ENCODE measurements at regions of chr13 and their contacts with region 1.

Region 1: DNA sequence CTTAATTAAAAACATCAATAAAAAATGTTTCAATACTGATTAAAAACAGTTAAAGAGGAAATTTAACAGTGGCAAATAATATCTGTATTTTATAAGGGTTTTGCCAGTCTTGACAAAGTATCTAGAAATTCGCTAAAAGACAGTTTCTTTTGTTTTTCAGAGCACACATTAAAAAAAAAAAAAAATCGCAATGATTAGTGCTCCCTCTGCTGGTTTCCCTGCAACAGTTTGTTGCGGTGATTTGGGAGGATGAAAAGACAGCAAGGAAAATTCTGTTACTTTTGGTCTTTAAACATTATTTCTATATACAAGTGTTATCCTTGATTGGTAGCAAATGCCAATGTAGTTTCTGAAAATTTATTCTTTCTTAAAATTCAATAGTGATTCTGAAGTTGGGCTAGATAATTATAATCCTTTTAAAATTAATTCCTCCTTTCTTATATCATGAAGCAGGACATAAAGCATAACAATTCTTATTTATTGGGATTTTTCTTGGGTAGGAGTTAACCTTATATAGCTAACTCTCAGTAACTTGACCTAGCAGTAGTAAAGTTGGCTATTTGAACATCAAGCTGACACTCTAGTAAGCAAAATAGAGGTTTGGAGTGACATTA is 23.1 kb upstream of the SPRY2 start:
- DNase-seq: no peak
- H3K4me3 ChIP-seq: no peak overlapping the region
- H3K27ac ChIP-seq: no peak overlapping the region
- H3K4me1 ChIP-seq: peaks cover 0 to 10% (median 3%) of the 10 kb centered on the region in 4 donors
- H3K27me3 ChIP-seq: no peaks in the 10 kb centered on the region
- CTCF ChIP-seq: peak; percentile 60 to 79

Region 2: GRCh38 chr13:79775830-79776229 is 588.2 kb before region 1 on chr13:
- intact Hi-C with region 1: loop called (anchors 10 kb)
- DNase-seq: peak in 1 of 2 donors; percentile 25
- H3K4me3 ChIP-seq: no peak overlapping the region
- H3K27ac ChIP-seq: no peak overlapping the region
- H3K4me1 ChIP-seq: peaks cover 0 to 10% (median 2%) of the 10 kb centered on the region in 4 donors
- H3K27me3 ChIP-seq: no peaks in the 10 kb centered on the region
- CTCF ChIP-seq: peak; percentile 32 to 52

Region 3: DNA sequence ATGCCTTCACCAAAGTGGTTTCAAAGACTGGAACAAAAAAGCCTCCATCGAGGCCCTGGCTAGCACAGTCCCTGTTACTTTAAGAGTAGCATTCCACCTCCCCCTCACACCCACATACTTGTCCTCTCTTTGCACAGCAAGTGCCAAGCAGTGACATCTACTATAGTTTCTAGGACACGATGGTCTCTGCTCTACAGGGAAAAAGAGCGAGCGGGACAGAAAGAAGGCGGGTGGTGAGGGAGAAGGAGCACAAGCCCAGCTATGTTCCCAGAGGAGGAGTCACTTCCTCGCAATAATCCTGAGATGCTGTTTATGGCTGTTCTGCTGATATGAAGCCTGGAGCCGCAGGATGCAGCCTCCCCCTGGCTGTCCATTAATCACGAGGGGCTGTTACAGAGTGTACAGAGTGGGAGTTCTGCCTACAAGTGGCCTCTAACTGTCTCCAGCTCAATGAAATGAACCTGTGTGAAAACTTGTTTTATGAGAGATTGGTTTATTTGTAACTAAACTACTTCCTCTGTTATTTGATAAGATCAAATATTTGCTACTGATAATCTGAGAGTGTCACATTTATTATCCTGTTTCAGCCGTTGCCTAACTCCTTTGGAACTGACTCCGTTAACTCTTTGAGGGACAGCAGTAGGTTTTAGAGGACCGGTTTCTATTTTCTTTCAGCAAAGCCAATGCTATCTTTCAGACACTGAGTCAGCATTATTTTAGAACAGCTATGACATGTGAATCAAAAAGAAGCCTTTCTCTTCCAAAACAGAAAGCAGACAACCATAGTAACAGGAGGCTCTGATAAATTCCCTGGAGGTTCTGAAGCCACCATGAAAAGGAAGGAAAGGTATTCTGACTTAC is 231.0 kb before region 1 on chr13:
- intact Hi-C with region 1: no loop called
- DNase-seq: peak; percentile 52 to 82
- H3K4me3 ChIP-seq: peak overlapping the region; percentile 29 to 34
- H3K27ac ChIP-seq: peak overlapping the region; percentile 66 to 78
- H3K4me1 ChIP-seq: peaks cover 0 to 42% (median 29%) of the 10 kb centered on the region in 4 donors
- H3K27me3 ChIP-seq: no peaks in the 10 kb centered on the region
- CTCF ChIP-seq: no peak